BJ (cell line): ENCODE measurements at regions of chr1 and their contacts with region 1.

Region 1: DNA sequence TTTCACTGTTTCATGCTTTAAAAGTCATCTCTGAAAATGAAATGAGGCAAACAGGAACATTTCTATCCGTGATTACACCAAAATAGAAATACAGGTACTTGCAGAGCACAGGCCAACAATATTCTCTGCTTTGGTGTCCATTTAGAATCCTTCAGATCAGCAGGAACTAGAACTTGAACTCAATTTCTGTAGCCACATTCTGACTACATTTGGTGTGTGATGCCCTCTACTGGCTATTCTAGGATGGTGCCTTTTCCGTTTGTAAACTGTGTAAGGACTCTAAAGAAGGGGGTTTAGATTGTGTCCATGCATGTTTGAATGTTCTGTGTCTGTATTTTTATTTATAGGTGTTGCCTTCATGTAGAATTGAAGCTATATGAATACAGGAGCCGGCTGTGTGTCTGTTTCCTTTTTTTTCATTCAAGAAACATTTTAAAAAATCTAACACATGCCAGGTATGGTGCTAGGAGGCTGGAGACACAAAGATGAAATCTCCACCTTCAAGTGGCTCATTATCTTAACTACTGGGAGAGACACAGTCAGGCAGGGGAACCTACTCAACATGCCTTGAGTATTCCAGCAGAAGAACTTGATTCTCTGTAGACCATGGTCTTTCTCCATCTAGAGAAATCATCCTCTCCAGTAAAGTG is 7.6 kb upstream of the ZNF326 start:
- DNase-seq: peak; percentile 37
- H3K4me3 ChIP-seq: no peak overlapping the region
- H3K27me3 ChIP-seq: no peaks in the 10 kb centered on the region
- CTCF ChIP-seq: peak; percentile 79

Region 2: GRCh38 chr1:89780721-89781120 is 206.6 kb before region 1 on chr1:
- CTCF ChIA-PET with region 1: interaction called, 51 read pairs
- POLR2A ChIA-PET with region 1: no interaction called
- DNase-seq: peak; percentile 21
- H3K4me3 ChIP-seq: no peak overlapping the region
- H3K27me3 ChIP-seq: no peaks in the 10 kb centered on the region
- CTCF ChIP-seq: peak; percentile 50

Region 3: GRCh38 chr1:89804642-89805237 is 182.6 kb before region 1 on chr1:
- CTCF ChIA-PET with region 1: interaction called, 73 read pairs
- POLR2A ChIA-PET with region 1: no interaction called
- DNase-seq: peak; percentile 44
- H3K4me3 ChIP-seq: no peak overlapping the region
- H3K27me3 ChIP-seq: no peaks in the 10 kb centered on the region; the same call in 1 of the 2 replicates
- CTCF ChIP-seq: peak; percentile 91

Region 4: DNA sequence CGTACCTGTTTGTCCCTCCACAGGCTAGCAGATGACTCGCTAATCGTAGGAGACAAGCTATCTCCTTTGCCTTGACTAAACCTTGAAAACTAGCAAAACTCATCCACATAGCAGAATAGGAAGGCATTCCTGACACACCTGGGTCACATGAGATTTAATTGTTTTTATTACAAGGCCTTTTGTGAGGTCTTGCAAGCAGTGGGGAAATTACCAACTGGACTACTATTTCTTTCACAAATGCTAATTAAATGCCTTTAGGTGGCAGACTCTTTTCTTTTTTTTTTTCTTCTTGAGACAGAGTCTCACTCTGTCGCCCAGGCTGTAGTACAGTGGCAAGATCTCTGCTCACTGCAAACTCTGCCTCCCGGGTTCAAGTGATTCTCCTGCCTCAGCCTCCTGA is 31.5 kb before region 1 on chr1:
- CTCF ChIA-PET with region 1: no interaction called
- POLR2A ChIA-PET with region 1: no interaction called
- DNase-seq: no peak
- H3K4me3 ChIP-seq: no peak overlapping the region
- H3K27me3 ChIP-seq: no peaks in the 10 kb centered on the region
- CTCF ChIP-seq: no peak